ENCODE measurements at regions of chr10 and their contacts with region 1.

Region 1: DNA sequence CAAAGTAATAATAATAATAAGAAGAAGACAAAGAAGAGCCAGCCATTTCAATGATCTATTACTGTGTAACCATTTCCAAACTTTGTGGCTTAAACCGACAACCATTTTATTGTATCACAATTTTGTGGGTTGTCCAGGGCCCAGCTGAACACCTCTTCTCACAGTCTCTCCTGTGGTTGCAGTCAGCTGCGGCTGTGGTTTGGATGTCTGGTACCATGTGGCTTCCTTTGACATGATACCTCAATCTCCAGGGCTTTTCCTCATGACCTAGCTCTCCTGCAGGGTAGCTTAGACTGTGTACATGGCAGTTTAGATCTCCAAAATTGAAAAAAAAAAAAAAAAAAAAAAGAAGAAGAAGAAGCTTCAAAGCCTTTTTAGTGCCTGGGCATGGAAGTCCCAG is 72.6 kb upstream of the NFKB2 start:
- DNase-seq: no peak
- ATAC-seq: peak in 3 of 4 donors; percentile 26 to 64 (median 58)
- H3K4me3 ChIP-seq: no peak overlapping the region
- H3K27ac ChIP-seq: peak overlapping the region; percentile 7
- H3K4me1 ChIP-seq: peaks cover 50% of the 10 kb centered on the region
- H3K27me3 ChIP-seq: no peaks in the 10 kb centered on the region
- CTCF ChIP-seq: no peak

Region 2: GRCh38 chr10:102245101-102245931 is 77.6 kb before region 1 on chr10 and contains the start of gene GBF1:
- intact Hi-C with region 1: no loop called
- DNase-seq: peak; percentile 89 to 94
- ATAC-seq: peak; percentile 81 to 87 (median 84)
- H3K4me3 ChIP-seq: peak within 1 kb of the TSS; percentile 89
- H3K27ac ChIP-seq: peak within 1 kb of the TSS; percentile 86
- H3K4me1 ChIP-seq: peaks cover 63% of the 10 kb centered on the region
- H3K27me3 ChIP-seq: no peaks in the 10 kb centered on the region
- CTCF ChIP-seq: no peak
- total RNA-seq, gene GBF1: 40.8 to 47.1 (median 44.2) TPM

Region 3: GRCh38 chr10:102280397-102281101 is 42.4 kb before region 1 on chr10:
- intact Hi-C with region 1: loop called (anchors 5 kb)
- DNase-seq: peak; percentile 73 to 85
- ATAC-seq: peak; percentile 96 to 98 (median 98)
- H3K4me3 ChIP-seq: peak overlapping the region; percentile 56
- H3K27ac ChIP-seq: peak overlapping the region; percentile 94
- H3K4me1 ChIP-seq: peaks cover 68% of the 10 kb centered on the region
- H3K27me3 ChIP-seq: no peaks in the 10 kb centered on the region
- CTCF ChIP-seq: no peak

Region 4: GRCh38 chr10:102286216-102286615 is 36.7 kb before region 1 on chr10:
- intact Hi-C with region 1: loop called (anchors 5 kb)
- DNase-seq: no peak
- ATAC-seq: no peak
- H3K4me3 ChIP-seq: no peak overlapping the region
- H3K27ac ChIP-seq: peak overlapping the region; percentile 42
- H3K4me1 ChIP-seq: peaks cover 90% of the 10 kb centered on the region
- H3K27me3 ChIP-seq: no peaks in the 10 kb centered on the region
- CTCF ChIP-seq: no peak

Region 5: DNA sequence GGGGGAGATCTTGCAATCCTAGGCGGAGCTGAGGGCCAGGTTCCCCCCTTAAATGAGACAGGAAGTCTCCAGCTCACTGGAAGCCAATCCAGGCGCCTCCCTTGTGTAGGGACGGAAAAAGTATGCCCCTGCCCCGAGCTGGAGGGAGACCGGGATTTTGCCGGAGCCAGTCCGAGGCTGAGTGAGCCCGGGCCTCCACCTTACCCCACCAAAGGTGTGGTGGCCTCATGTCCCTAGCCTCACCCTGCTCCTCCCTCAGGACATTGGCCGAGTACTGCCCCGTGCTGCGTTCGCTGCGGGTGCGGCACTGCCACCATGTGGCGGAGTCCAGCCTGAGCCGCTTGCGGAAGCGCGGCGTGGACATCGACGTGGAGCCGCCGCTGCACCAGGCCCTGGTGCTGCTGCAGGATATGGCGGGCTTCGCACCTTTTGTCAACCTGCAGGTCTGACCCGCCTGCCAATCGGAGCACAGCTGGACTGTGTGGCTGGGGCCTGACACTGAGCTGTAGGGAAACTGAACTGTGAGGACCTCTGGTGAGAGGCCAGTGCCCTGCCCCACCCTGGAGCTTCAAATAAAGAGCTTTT is 99.7 kb after region 1 on chr10:
- intact Hi-C with region 1: no loop called
- DNase-seq: peak; percentile 81 to 91
- ATAC-seq: peak; percentile 67 to 72 (median 72)
- H3K4me3 ChIP-seq: peak overlapping the region; percentile 98
- H3K27ac ChIP-seq: peak overlapping the region; percentile 87
- H3K4me1 ChIP-seq: peaks cover 20% of the 10 kb centered on the region
- H3K27me3 ChIP-seq: peaks cover 0 to 7% (median 2%) of the 10 kb centered on the region in 3 donors
- CTCF ChIP-seq: peak; percentile 77

Measured in psoas muscle (tissue), 8 donors.